ENCODE measurements at regions of chr15 and their contacts with region 1.

Region 1: DNA sequence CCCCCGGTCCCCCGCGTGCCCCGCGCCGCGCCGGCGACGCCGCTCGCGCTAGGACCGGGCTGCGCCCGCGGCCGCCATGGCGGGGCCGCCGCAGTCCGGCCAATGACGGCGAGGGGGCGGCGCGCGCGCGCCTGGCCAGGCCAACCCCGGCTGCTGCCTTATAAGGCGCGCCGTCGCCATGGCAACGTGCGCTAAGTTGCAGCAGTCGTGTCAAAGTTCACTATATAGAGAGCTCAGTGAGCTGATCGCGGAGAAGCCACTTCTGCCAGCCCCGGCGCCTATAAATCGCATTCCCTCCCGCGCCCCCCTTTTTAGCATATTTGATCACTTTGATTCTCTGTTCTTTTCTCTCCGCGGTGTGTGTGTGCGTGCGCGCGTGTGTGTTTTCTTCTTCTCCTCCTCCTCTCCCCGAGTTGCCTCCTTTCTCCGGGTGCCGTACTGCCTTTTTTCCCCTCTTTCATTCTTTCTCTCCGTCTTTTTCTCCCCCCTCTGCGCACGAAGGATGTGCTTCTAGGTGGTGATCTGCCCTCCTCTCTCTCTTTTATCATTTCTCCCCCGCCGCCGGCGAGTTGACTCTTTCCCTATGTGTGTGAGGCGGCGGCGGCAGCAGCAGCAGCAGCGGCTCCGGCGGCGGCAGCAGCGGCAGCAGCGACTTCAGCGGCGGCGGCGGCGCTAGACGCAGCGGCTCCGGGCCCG is at the start of gene NR2F2:
- DNase-seq: peak; percentile 93 to 94
- ATAC-seq: peak; percentile 82 to 93 (median 88)
- H3K4me3 ChIP-seq: peak within 1 kb of the TSS; percentile 64 to 87 (median 78)
- H3K27ac ChIP-seq: peak within 1 kb of the TSS; percentile 77 to 96 (median 90)
- H3K4me1 ChIP-seq: peaks cover 0 to 28% (median 15%) of the 10 kb centered on the region in 9 donors
- H3K27me3 ChIP-seq: peaks cover 0 to 95% (median 36%) of the 10 kb centered on the region in 7 donors
- CTCF ChIP-seq: no peak
- total RNA-seq, gene NR2F2: 8.2 to 31.7 (median 14.3) TPM

Region 2: DNA sequence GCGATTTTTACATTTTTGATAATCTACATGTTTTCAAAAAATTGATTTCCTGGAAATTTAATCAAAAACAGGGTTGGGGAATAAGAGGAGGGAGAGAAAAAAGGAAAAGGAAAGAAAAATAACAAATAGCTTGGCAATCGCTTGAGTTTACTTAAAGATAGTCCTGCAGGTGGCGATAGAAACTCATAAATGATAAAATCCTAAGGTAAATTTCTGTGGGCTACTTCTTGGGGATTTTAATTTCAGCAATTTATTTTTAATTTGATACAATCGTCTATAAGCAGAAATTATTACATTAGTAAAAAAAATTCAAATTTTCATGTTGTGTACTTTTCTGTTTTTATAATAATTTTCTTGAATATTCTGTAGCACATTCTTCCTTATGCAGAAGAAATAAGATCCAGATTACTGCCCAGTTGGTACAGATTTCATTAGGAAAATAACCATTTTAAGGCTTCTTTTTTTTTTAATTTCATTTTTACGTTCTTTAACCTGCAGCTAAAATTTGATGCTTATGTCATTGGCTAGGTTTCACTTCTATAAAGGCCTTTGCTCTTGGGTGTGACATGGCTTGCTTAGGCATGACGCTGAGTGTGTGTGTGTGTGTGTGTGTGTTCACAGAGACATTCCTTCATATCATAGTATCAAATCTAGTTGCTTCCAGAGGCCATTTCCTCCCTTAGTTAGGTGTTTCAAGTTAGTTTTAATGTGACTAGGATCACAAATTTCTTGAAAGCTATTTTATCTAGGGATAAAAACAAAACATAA is 1917.4 kb before region 1 on chr15:
- intact Hi-C with region 1: loop called in 1 of 10 experiments (anchors 10 kb)
- DNase-seq: no peak
- ATAC-seq: no peak
- H3K4me3 ChIP-seq: no peak overlapping the region
- H3K27ac ChIP-seq: no peak overlapping the region
- H3K4me1 ChIP-seq: peaks cover 0 to 9% (median 0%) of the 10 kb centered on the region in 9 donors
- H3K27me3 ChIP-seq: peaks cover 0 to 36% (median 4%) of the 10 kb centered on the region in 7 donors
- CTCF ChIP-seq: peak in 7 of 9 donors; percentile 37 to 58 (median 50)

Region 3: GRCh38 chr15:95025924-95026728 is 1304.5 kb before region 1 on chr15:
- intact Hi-C with region 1: loop called in 2 of 10 experiments (anchors 10 kb)
- DNase-seq: peak; percentile 32 to 54
- ATAC-seq: peak in 4 of 8 donors; percentile 31 to 53 (median 41)
- H3K4me3 ChIP-seq: no peak overlapping the region
- H3K27ac ChIP-seq: no peak overlapping the region
- H3K4me1 ChIP-seq: no peaks in the 10 kb centered on the region
- H3K27me3 ChIP-seq: no peaks in the 10 kb centered on the region
- CTCF ChIP-seq: peak in 8 of 9 donors; percentile 44 to 66 (median 56)

Region 4: DNA sequence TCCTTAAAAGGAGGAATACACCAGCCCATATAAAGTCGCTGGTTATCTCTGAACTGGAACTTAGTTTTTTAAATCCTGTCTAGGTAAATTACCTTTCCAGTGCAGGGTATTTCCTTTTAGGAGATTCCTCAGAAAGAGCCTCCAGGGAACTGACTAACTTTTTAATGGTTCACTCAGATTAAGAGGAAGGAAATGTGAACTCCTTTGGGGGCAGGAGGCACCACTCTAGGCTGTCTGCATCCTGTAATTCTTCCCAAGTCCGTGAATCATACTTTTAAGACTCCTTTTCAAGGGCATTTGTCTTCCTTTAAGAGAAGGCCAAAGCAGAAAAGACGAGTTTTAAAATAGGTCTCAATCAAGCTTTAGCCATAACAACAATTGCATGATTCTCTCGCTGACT is 871.3 kb before region 1 on chr15:
- intact Hi-C with region 1: loop called in 1 of 10 experiments (anchors 10 kb)
- DNase-seq: no peak
- ATAC-seq: peak in 7 of 8 donors; percentile 49 to 85 (median 77)
- H3K4me3 ChIP-seq: no peak overlapping the region
- H3K27ac ChIP-seq: peak overlapping the region in 9 of 10 donors; percentile 0 to 77 (median 56)
- H3K4me1 ChIP-seq: peaks cover 0 to 34% (median 18%) of the 10 kb centered on the region in 9 donors
- H3K27me3 ChIP-seq: no peaks in the 10 kb centered on the region
- CTCF ChIP-seq: no peak

Region 5: DNA sequence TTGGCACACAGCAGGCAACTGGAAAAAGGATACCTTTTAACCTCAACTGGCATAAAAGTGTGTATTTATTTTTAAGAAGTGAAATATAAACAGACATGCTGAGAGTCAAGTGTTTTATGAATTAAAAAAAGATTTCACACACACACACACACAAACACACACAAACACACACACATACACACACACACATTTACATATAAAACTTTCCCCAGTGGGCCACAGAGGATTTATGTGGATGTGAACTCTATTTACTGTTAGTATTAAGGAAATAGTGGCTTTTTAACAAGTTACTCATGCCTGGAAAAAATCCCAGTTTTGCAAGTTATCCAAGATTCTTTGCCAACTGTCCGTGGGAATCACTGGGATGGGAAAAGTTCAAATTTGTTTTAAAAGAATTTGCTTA is 726.0 kb before region 1 on chr15:
- intact Hi-C with region 1: loop called in 2 of 10 experiments (anchors 10 kb)
- DNase-seq: peak in 1 of 2 donors; percentile 61
- ATAC-seq: peak in 7 of 8 donors; percentile 47 to 89 (median 72)
- H3K4me3 ChIP-seq: no peak overlapping the region
- H3K27ac ChIP-seq: peak overlapping the region in 8 of 10 donors; percentile 3 to 73 (median 60)
- H3K4me1 ChIP-seq: peaks cover 0 to 28% (median 15%) of the 10 kb centered on the region in 9 donors
- H3K27me3 ChIP-seq: no peaks in the 10 kb centered on the region
- CTCF ChIP-seq: no peak

Region 6: GRCh38 chr15:95843241-95843910 is 487.2 kb before region 1 on chr15:
- intact Hi-C with region 1: loop called in 1 of 10 experiments (anchors 5 kb)
- DNase-seq: peak; percentile 24 to 53
- ATAC-seq: peak; percentile 64 to 88 (median 80)
- H3K4me3 ChIP-seq: no peak overlapping the region
- H3K27ac ChIP-seq: peak overlapping the region in 8 of 10 donors; percentile 12 to 70 (median 54)
- H3K4me1 ChIP-seq: peaks cover 0 to 21% (median 6%) of the 10 kb centered on the region in 9 donors
- H3K27me3 ChIP-seq: no peaks in the 10 kb centered on the region
- CTCF ChIP-seq: no peak

Region 7: DNA sequence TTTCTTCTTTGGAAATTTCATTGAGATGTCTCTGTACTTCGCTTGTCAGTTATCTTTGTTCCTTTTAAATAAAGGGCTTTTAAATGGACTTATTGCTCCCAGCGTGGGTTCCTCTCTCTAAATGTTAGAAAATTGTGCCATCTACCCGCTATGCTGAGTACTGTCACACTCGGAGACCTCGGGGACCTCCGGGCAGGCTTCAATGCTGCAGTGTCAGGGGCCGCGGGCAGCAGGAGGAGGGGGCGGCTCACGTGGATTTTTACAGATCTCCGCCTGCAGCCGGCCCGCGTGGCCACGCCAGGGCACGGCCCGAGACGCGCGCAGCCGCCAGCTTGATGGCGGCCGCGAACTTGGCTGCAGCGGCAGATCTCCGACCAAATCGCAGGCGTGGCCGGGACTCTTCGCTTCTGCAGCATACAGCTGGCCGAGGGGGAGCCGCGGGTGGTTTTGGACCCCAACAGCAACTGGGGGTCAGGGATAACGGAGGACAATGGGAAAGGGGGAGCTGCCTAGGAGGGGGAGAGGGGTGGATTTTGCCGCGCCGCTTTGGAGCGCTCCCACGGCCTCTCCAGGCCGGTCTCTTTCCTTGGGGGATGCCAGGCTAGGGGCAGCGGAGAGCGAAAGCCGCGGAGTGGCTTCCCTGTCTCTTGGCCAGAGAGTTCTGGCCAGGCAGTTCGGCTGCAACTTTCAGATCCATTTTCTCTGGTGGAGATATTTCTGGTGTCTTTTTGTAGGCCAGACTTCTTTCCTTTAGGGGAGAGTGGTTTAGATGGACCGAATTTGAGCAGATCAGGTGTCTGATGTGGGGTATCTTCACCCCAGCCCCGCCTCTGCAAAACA is 15.2 kb after region 1 on chr15:
- intact Hi-C with region 1: loop called in 1 of 10 experiments (anchors 1 kb)
- DNase-seq: peak; percentile 69 to 82
- ATAC-seq: peak; percentile 58 to 85 (median 70)
- H3K4me3 ChIP-seq: peak overlapping the region; percentile 2 to 81 (median 56)
- H3K27ac ChIP-seq: peak overlapping the region; percentile 59 to 94 (median 90)
- H3K4me1 ChIP-seq: peaks cover 0 to 83% (median 36%) of the 10 kb centered on the region in 9 donors
- H3K27me3 ChIP-seq: peaks cover 4 to 100% (median 77%) of the 10 kb centered on the region in 7 donors
- CTCF ChIP-seq: peak; percentile 40 to 83 (median 65)

Region 8: GRCh38 chr15:96409215-96410138 is 78.9 kb after region 1 on chr15:
- intact Hi-C with region 1: no loop called
- DNase-seq: no peak
- ATAC-seq: peak in 2 of 8 donors; percentile 43 to 59
- H3K4me3 ChIP-seq: peak overlapping the region in 9 of 10 donors; percentile 23 to 50 (median 38)
- H3K27ac ChIP-seq: no peak overlapping the region
- H3K4me1 ChIP-seq: peaks cover 7 to 20% (median 14%) of the 10 kb centered on the region in 9 donors
- H3K27me3 ChIP-seq: peaks cover 21 to 98% (median 92%) of the 10 kb centered on the region in 7 donors
- CTCF ChIP-seq: no peak